Left ventricle myocardium superior (tissue), 1 donor: ENCODE measurements at regions of chr19 and their contacts with region 1.

Region 1: DNA sequence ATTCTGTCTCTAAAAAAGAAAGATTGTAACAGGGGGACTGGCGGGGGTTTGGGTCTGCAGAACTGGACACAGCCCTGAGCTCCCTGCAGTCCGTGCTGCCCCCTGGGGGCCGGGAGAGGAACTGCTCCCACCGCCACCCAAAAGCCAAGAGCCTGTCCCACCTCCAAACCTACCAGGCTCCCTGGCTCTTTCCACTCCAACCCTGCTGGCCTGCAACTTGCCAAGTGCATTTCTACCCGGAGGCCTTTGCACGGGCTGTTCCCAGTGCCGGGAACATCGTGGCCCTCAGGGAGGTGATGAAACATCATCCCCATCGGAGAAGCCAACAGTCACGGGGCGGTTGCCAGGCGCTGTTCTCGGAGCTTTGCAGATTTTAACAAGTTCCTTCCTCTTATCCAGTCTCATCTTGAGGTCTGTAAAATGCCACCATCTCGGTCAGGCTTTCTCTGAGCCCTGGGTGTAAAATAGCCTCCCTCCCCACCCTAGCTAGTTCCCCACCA is 50.7 kb downstream of the SMIM24 start:
- DNase-seq: peak; percentile 93
- ATAC-seq: peak; percentile 85

Region 2: GRCh38 chr19:3365836-3366752 is 63.5 kb before region 1 on chr19 and contains the start of gene NFIC:
- intact Hi-C with region 1: loop called (anchors 10 kb)
- DNase-seq: peak; percentile 87
- ATAC-seq: peak; percentile 65
- total RNA-seq, gene NFIC: 178 TPM

Region 3: DNA sequence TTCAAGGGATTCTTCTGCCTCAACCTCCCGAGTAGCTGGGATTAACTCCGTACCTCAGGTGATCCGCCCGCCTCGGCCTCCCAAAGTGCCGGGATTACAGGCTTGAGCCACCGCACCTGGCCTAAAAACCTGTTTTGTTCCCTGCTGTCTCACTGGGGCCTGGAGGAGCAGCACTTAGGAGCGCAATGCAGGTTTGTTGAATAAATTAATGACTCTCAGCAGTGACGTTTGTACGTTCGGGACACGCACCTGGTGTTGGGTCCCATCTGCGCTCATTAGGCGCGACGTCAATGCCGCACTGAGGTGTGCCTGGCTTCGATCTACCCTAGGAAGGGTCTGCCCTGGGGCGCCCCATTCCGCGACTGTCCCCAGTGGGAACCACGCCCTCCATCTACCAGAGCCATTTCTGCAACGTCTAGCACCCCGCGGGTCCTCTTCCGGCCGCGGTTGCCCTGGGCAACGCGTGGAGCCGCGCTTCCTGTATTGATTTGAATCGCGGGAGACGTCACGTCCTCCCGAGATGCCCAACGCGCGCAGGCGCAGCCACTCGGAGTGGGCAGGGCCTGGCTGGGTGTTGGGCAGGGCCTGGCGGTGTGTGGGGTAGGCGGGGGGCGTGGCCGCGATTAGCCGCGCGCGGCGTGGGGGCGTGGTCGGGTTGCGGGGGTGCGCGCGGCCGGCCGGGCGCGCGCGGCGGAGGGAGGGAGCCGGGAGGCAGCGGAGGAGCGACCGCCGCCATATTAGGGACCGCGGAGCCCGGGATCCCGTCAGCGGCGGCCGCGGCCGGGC is 76.2 kb after region 1 on chr19 and contains the start of gene FZR1:
- intact Hi-C with region 1: no loop called
- DNase-seq: peak; percentile 100
- ATAC-seq: peak; percentile 97
- total RNA-seq, gene FZR1: 19.2 TPM